ENCODE measurements at regions of chr3 and their contacts with region 1.

Region 1: DNA sequence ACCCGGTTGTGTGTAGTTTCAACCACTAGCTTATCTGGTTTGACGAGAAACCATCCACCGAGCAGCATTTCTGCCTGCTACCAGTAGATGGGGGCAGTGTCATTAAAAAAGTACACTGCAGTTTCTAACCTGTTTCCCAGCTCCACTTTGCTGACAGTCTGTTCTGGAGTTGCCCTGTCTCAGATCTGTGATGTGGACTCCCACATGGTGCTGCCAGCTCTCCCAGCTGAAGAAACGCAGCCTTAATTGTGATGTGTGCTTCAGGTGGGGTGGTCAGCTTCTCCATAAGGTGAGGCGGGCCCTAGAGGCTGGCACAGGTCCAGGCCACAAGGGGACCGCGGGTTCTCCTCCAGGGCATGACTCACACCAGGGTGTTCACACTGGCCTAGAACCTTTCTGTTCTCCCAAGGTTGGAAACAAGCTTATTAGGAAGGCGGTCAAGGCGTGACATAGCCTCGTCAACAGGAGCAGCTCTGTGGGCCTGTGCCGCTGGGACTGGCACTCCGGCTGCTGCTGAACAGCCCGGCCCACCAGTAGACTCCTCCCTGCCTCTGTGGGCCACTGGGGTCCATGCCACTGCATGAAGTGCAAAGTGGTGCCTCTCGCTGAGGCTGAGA is 2.9 kb upstream of the FAM43A start:
- DNase-seq: peak; percentile 87
- ATAC-seq: peak; percentile 37
- H3K4me3 ChIP-seq: no peak overlapping the region
- H3K4me3 Mint-ChIP-seq: peak overlapping the region; percentile 23
- H3K27ac ChIP-seq: no peak overlapping the region
- H3K27ac Mint-ChIP-seq: peak overlapping the region; percentile 26
- H3K4me1 ChIP-seq: peaks cover 15 to 29% of the 10 kb centered on the region in 2 donors
- H3K4me1 Mint-ChIP-seq: peaks cover 43% of the 10 kb centered on the region
- H3K27me3 ChIP-seq: no peaks in the 10 kb centered on the region
- H3K27me3 Mint-ChIP-seq: no peaks in the 10 kb centered on the region
- CTCF ChIP-seq: peak; percentile 90

Region 2: GRCh38 chr3:194671900-194672808 is 10.6 kb before region 1 on chr3 and contains the start of gene LSG1:
- CTCF ChIA-PET with region 1: interaction called, 231 read pairs
- POLR2A ChIA-PET with region 1: interaction called, 27 read pairs
- intact Hi-C with region 1: loop called (anchors 1 kb)
- DNase-seq: peak; percentile 97
- ATAC-seq: peak; percentile 96
- H3K4me3 ChIP-seq: peak within 1 kb of the TSS; percentile 67 to 99 (median 85)
- H3K4me3 Mint-ChIP-seq: peak within 1 kb of the TSS; percentile 99
- H3K27ac ChIP-seq: peak within 1 kb of the TSS; percentile 92 to 96
- H3K27ac Mint-ChIP-seq: peak within 1 kb of the TSS; percentile 99
- H3K4me1 ChIP-seq: peaks cover 13 to 15% of the 10 kb centered on the region in 2 donors
- H3K4me1 Mint-ChIP-seq: peaks cover 25% of the 10 kb centered on the region
- H3K27me3 ChIP-seq: no peaks in the 10 kb centered on the region
- H3K27me3 Mint-ChIP-seq: peaks cover 7% of the 10 kb centered on the region
- CTCF ChIP-seq: no peak
- total RNA-seq, gene LSG1: 49.8 and 54.6 TPM in 2 replicates

Region 3: DNA sequence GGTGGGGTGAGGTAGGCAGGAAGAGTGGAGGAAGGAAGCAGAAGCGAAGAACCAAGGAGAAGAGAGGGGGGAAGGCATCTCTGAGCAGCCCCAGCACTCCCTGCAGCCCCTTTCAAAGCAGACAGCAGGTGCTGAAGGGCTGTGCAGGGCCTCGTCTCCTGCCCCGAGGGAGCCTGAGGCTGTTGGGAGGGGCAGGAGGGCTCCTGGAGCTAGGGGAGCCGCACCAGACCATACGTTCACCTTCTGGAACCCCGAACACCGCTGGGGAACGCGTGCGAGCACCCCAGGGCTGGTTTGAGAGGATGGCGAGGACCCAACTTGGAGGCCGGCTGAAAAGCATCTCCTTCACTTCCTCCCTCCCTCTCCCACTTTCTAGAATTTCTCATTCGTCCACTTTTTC is 262.7 kb after region 1 on chr3:
- CTCF ChIA-PET with region 1: interaction called, 16 read pairs
- POLR2A ChIA-PET with region 1: interaction called, 4 read pairs
- intact Hi-C with region 1: no loop called
- DNase-seq: no peak
- ATAC-seq: no peak
- H3K4me3 ChIP-seq: no peak overlapping the region
- H3K4me3 Mint-ChIP-seq: no peak overlapping the region
- H3K27ac ChIP-seq: no peak overlapping the region
- H3K27ac Mint-ChIP-seq: no peak overlapping the region
- H3K4me1 ChIP-seq: peaks cover 18 to 26% of the 10 kb centered on the region in 2 donors
- H3K4me1 Mint-ChIP-seq: peaks cover 26% of the 10 kb centered on the region
- H3K27me3 ChIP-seq: no peaks in the 10 kb centered on the region
- H3K27me3 Mint-ChIP-seq: peaks cover 8% of the 10 kb centered on the region
- CTCF ChIP-seq: no peak

Region 4: DNA sequence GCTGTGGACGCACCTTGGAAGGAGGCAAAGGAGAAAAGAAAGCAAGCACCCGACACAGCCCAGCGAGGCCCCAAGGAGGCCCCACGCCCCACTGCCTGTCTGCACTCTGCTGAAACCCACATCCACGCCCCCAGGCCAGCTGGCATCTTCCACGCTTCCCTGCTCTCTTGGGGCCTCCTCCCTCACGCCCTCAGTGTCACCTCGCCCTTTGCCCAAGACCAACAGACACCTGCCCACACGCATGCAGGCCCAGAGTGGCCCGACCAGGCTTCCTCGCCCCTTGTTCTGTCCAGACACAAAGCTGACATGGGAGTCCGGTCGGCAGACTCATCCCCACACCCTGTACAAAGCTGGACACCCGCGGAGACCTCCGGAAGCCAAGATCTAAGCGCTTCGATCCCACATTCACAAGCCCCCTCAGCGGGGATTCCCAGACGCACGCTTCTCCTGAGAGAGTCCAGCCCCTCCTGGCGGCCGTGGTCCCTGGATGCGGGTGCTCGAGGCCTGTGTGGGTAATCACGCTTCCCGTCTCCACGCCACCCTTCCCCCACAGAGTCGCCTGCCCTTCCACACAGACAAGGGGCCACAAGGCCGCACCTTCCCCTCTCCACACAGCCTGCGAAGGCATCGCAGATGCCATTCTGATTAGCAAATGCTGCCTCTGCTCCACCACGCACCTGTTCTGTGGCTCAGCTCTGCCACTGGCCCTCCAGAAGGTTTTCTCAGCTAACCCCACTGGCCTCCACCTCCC is 411.5 kb after region 1 on chr3:
- CTCF ChIA-PET with region 1: interaction called, 38 read pairs
- POLR2A ChIA-PET with region 1: interaction called, 15 read pairs
- intact Hi-C with region 1: no loop called
- DNase-seq: peak; percentile 87
- ATAC-seq: peak; percentile 85
- H3K4me3 ChIP-seq: peak overlapping the region in 4 of 5 experiments; percentile 36 to 63 (median 52)
- H3K4me3 Mint-ChIP-seq: peak overlapping the region; percentile 81
- H3K27ac ChIP-seq: peak overlapping the region; percentile 89 to 95
- H3K27ac Mint-ChIP-seq: peak overlapping the region; percentile 93
- H3K4me1 ChIP-seq: peaks cover 44 to 49% of the 10 kb centered on the region in 2 donors
- H3K4me1 Mint-ChIP-seq: peaks cover 54% of the 10 kb centered on the region
- H3K27me3 ChIP-seq: no peaks in the 10 kb centered on the region
- H3K27me3 Mint-ChIP-seq: no peaks in the 10 kb centered on the region
- CTCF ChIP-seq: no peak

Region 5: GRCh38 chr3:195147649-195148095 is 464.9 kb after region 1 on chr3:
- CTCF ChIA-PET with region 1: interaction called, 11 read pairs
- POLR2A ChIA-PET with region 1: interaction called, 9 read pairs
- intact Hi-C with region 1: loop called (anchors 5 kb)
- DNase-seq: peak; percentile 77
- ATAC-seq: peak; percentile 73
- H3K4me3 ChIP-seq: peak overlapping the region; percentile 38 to 56 (median 44)
- H3K4me3 Mint-ChIP-seq: peak overlapping the region; percentile 90
- H3K27ac ChIP-seq: peak overlapping the region; percentile 45
- H3K27ac Mint-ChIP-seq: peak overlapping the region; percentile 89
- H3K4me1 ChIP-seq: peaks cover 51 to 77% of the 10 kb centered on the region in 2 donors
- H3K4me1 Mint-ChIP-seq: peaks cover 71% of the 10 kb centered on the region
- H3K27me3 ChIP-seq: no peaks in the 10 kb centered on the region
- H3K27me3 Mint-ChIP-seq: no peaks in the 10 kb centered on the region
- CTCF ChIP-seq: no peak

Region 6: DNA sequence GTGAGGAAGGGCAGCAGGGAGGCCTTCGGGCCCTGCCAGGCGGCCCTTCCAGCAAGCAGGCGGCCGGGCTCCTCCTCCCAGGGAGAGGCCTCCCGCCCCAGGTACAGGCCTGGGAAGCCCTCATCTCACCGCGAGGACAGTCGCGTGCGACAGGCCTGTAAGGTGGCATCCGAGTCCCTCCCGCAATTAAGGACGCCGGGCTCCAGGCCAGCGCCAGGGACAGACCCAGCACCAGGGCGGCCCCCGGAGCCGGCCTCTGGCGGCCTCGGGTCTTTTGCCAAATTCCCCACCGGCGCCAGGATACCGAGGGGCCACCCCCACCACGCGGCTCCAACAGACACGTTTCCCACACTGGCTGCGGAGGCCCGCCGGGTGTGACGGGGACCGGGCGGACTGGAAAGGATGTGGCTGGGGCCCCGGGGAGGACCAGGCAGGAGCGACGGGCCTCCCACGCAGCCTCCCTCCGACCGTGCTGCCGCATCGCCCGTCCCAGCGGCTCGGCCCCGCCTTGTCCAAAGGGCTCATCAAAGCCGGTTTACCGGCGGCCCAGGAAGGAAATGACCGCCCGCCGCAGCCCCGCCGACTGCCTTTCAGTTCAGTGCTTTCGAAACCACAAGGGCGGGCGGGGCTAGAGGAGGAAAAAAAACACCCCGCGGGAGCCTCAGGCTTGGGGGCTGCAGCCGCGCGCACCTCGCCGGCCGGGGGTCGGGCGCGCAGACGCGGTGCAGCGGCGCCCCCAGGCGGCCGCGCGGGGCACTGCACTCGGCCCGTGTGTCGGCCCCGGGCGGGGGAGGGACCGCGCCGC is 576.9 kb after region 1 on chr3:
- CTCF ChIA-PET with region 1: interaction called, 68 read pairs
- POLR2A ChIA-PET with region 1: interaction called, 7 read pairs
- intact Hi-C with region 1: loop called (anchors 1 kb)
- DNase-seq: peak; percentile 95
- ATAC-seq: peak; percentile 90
- H3K4me3 ChIP-seq: peak overlapping the region in 4 of 5 experiments; percentile 63 to 89 (median 72)
- H3K4me3 Mint-ChIP-seq: peak overlapping the region; percentile 74
- H3K27ac ChIP-seq: peak overlapping the region; percentile 78 to 87
- H3K27ac Mint-ChIP-seq: peak overlapping the region; percentile 92
- H3K4me1 ChIP-seq: peaks cover 16 to 23% of the 10 kb centered on the region in 2 donors
- H3K4me1 Mint-ChIP-seq: peaks cover 19% of the 10 kb centered on the region
- H3K27me3 ChIP-seq: no peaks in the 10 kb centered on the region
- H3K27me3 Mint-ChIP-seq: no peaks in the 10 kb centered on the region
- CTCF ChIP-seq: peak; percentile 73

Measured in B cell (primary cell).